OCI-LY7 (cell line): ENCODE measurements at regions of chr13 and their contacts with region 1.

Region 1: GRCh38 chr13:30132623-30133553 is 174.5 kb downstream of the KATNAL1 start:
- DNase-seq: peak; percentile 93
- H3K4me3 ChIP-seq: no peak overlapping the region
- H3K27ac ChIP-seq: no peak overlapping the region
- H3K4me1 ChIP-seq: peaks cover 10% of the 10 kb centered on the region
- CTCF ChIP-seq: peak; percentile 94

Region 2: DNA sequence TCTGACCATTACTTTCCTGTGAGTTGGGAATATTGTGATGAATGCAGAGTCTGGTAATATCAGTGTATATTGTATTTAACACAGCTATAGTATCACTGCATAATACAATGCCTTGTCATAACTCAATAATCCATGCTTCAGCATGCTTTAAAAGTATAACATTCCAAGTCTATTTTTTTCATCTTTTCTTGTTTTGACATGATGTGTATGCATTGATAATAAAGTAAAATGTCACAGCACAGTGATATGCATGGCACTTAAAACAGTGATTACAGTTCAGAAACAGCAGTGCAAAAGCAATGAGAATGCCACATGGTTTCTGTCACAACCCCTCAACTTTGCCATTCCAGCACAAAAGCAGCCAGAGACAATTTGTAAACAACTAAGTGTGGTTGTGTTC is 156.6 kb after region 1 on chr13:
- CTCF ChIA-PET with region 1: no interaction called
- POLR2A ChIA-PET with region 1: no interaction called
- intact Hi-C with region 1: no loop called
- DNase-seq: no peak
- H3K4me3 ChIP-seq: no peak overlapping the region
- H3K27ac ChIP-seq: no peak overlapping the region
- H3K4me1 ChIP-seq: peaks cover 38% of the 10 kb centered on the region
- CTCF ChIP-seq: no peak

Region 3: DNA sequence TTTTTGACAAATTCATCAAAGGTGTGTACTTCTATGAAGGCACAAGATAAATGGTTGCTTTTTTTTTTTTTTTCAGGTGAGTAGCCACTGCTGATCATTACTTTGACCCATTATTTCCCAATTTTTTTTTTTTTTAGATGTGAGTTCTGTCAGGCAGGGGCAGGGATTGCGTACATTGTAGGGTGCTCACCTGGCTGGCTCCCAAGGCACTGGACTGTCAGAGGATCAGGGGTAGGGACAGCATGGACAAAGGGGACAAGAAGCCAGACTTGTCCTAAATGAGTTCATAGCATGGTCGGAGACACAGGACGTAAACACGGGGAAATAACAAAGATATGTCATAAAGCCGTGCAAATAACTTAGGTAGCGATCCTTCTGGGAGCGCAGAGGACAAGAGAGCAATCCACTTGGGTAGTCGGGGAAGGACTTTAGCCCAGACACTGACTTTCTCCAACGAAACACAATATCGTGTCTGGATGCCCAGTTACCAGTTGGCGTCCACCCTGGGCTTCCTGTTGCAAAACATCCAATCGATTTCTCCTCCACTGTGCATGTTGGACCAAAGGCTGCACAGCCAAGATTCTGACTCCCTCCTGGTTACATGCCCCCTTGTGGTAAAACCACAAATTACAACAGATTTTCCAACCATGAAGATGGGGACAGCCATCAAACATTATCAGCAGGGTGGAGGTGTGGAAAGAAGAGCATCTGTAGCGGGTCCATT is 201.9 kb after region 1 on chr13:
- CTCF ChIA-PET with region 1: interaction called, 4 read pairs
- POLR2A ChIA-PET with region 1: interaction called, 3 read pairs
- intact Hi-C with region 1: loop called (anchors 1 kb)
- DNase-seq: peak; percentile 60
- H3K4me3 ChIP-seq: peak overlapping the region; percentile 58
- H3K27ac ChIP-seq: peak overlapping the region; percentile 98
- H3K4me1 ChIP-seq: peaks cover 80% of the 10 kb centered on the region
- CTCF ChIP-seq: peak; percentile 85

Region 4: DNA sequence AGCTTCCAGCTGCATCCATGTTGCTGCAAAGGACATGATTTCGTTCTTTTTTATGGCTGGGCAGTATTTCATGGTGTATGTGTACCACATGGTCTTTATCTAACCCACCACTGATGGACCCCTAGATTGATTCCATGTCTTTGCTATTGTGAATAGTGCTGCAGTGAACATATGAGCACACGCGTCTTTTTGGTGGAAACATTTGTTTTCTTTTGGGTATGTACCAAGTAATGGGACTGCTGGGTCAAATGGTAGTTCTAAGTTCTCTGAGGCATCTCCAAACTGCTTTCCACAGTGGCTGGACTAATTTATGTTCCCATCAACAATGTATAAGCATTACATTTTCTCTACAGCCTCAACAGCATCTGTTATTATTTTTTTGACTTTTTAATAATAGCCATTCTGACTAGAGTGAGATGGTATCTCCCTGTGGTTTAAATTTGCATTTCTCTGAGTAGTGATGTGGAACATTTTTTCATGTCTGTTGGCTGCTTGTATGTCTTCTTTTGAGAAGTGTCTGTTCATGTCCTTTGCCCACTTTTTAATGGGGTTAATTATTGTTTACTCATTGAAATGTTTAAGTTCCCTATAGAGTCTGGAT is 282.6 kb after region 1 on chr13:
- CTCF ChIA-PET with region 1: no interaction called
- POLR2A ChIA-PET with region 1: no interaction called
- intact Hi-C with region 1: loop called (anchors 1 kb)
- DNase-seq: peak; percentile 86
- H3K4me3 ChIP-seq: peak overlapping the region; percentile 48
- H3K27ac ChIP-seq: peak overlapping the region; percentile 92
- H3K4me1 ChIP-seq: peaks cover 84% of the 10 kb centered on the region
- CTCF ChIP-seq: no peak

Region 5: GRCh38 chr13:30551189-30551588 is 418.3 kb after region 1 on chr13:
- CTCF ChIA-PET with region 1: interaction called, 3 read pairs
- POLR2A ChIA-PET with region 1: no interaction called
- intact Hi-C with region 1: loop called (anchors 1 kb)
- DNase-seq: peak; percentile 83
- H3K4me3 ChIP-seq: no peak overlapping the region
- H3K27ac ChIP-seq: no peak overlapping the region
- H3K4me1 ChIP-seq: peaks cover 25% of the 10 kb centered on the region
- CTCF ChIP-seq: peak; percentile 93

Region 6: GRCh38 chr13:30802953-30803478 is 670.1 kb after region 1 on chr13:
- CTCF ChIA-PET with region 1: no interaction called
- POLR2A ChIA-PET with region 1: no interaction called
- intact Hi-C with region 1: loop called (anchors 2 kb)
- DNase-seq: peak; percentile 82
- H3K4me3 ChIP-seq: no peak overlapping the region
- H3K27ac ChIP-seq: no peak overlapping the region
- H3K4me1 ChIP-seq: no peaks in the 10 kb centered on the region
- CTCF ChIP-seq: peak; percentile 94